Heart right ventricle (tissue), 16 donors: ENCODE measurements at regions of chr17 and their contacts with region 1.

Region 1: GRCh38 chr17:64527914-64528313 is 21.1 kb downstream of the CEP95 start:
- DNase-seq: no peak
- ATAC-seq: no peak
- H3K4me3 ChIP-seq: no peak overlapping the region
- H3K27ac ChIP-seq: no peak overlapping the region
- H3K4me1 ChIP-seq: peaks cover 0 to 7% (median 0%) of the 10 kb centered on the region in 9 donors
- H3K27me3 ChIP-seq: no peaks in the 10 kb centered on the region
- CTCF ChIP-seq: no peak

Region 2: DNA sequence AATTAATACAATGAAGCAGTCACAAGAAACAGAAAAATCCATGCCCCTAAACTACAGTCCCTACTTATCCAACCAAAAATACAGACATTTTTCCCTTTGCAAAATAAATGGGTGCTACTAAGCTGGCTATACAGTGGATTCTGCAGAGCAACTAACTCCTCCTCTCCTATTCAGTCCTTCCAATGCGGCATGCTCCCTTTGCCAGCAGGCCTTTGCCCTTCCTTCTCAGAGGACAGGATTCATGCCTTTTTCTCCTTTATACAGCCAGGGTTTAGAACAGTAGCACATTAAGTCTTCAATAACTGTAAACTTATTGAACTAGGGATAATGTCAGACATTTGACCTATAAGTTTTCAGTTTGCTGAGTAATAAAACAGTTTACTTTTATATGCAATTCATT is 64.0 kb after region 1 on chr17:
- intact Hi-C with region 1: loop called in 1 of 10 experiments (anchors 2 kb)
- DNase-seq: no peak
- ATAC-seq: no peak
- H3K4me3 ChIP-seq: no peak overlapping the region
- H3K27ac ChIP-seq: no peak overlapping the region
- H3K4me1 ChIP-seq: peaks cover 0 to 10% (median 0%) of the 10 kb centered on the region in 9 donors
- H3K27me3 ChIP-seq: no peaks in the 10 kb centered on the region
- CTCF ChIP-seq: no peak